Activated B cell treated with CpG ODN at 0.5 μM for 24 hours (primary cell): ENCODE measurements at regions of chr16 and their contacts with region 1.

Region 1: DNA sequence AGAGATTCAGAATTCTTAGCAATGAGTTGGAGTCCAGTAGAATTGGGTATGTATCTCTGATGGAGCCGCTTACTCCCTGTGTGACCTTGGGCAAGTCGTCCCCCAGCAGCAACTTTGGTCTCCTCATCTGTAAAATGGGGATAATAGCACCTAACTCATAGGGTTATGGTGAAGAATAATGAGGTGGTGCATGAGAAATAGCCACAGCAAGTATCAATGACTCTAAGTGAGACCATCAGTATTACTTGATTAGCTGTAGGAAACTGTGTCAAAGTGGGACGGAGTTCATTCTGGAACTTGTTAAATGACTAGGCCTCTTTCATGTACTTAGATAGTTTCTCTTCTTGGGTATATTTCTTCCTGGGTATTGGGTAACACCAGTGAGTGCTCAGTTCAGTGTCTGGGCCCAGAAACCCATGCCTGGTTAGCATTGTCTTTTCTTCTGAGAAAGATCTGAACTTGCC is 6.4 kb downstream of the PRKCB start:
- DNase-seq: no peak
- ATAC-seq: peak; percentile 14
- H3K4me3 Mint-ChIP-seq: peak overlapping the region; percentile 3
- H3K27ac Mint-ChIP-seq: peak overlapping the region; percentile 85
- H3K4me1 Mint-ChIP-seq: peaks cover 88% of the 10 kb centered on the region
- H3K27me3 Mint-ChIP-seq: no peaks in the 10 kb centered on the region
- CTCF ChIP-seq: no peak

Region 2: DNA sequence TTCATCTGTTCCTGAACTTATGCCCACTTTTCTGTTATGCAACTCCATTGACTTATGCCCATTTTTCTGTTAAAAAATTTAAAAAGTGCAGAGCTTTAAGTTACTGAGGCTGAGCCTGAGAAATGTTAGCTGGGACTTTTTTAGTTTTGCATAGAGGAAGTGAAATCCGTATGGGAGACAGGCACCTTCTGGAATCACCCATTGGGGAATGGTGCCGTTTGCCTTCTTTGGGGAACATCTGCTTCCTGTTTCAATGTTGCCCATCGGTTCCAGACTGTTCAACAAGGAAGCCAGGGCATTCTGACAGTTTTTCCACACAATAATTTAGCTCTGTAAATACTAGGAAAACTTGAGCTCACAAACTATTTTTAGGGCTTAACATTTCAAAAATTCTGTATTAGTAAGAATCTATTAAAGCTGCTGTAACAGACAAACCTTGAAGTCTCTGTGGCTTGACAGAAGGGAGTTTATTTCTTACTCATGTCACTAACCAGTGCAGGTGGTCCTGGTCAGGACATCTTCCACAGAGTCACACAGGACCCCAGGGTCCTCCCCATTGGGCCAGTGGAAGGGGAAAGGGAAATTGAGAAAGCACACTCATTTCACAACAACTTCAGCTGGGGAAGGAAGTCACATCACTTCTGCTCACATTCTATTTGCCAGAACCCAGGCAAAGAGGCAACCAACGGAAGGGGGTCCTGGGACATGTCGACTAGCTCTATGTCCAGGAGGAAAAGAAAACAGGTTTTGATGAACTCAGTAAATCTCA is 10.8 kb after region 1 on chr16:
- CTCF ChIA-PET with region 1: interaction called, 5 read pairs
- POLR2A ChIA-PET with region 1: interaction called, 25 read pairs
- intact Hi-C with region 1: loop called (anchors 1 kb)
- DNase-seq: no peak
- ATAC-seq: peak; percentile 54
- H3K4me3 Mint-ChIP-seq: peak overlapping the region; percentile 67
- H3K27ac Mint-ChIP-seq: peak overlapping the region; percentile 86
- H3K4me1 Mint-ChIP-seq: peaks cover 98% of the 10 kb centered on the region
- H3K27me3 Mint-ChIP-seq: no peaks in the 10 kb centered on the region
- CTCF ChIP-seq: no peak

Region 3: GRCh38 chr16:23858542-23858941 is 16.4 kb after region 1 on chr16:
- CTCF ChIA-PET with region 1: interaction called, 5 read pairs
- POLR2A ChIA-PET with region 1: interaction called, 25 read pairs
- intact Hi-C with region 1: loop called (anchors 1 kb)
- DNase-seq: no peak
- ATAC-seq: no peak
- H3K4me3 Mint-ChIP-seq: peak overlapping the region; percentile 24
- H3K27ac Mint-ChIP-seq: peak overlapping the region; percentile 89
- H3K4me1 Mint-ChIP-seq: peaks cover 97% of the 10 kb centered on the region
- H3K27me3 Mint-ChIP-seq: no peaks in the 10 kb centered on the region
- CTCF ChIP-seq: no peak

Region 4: DNA sequence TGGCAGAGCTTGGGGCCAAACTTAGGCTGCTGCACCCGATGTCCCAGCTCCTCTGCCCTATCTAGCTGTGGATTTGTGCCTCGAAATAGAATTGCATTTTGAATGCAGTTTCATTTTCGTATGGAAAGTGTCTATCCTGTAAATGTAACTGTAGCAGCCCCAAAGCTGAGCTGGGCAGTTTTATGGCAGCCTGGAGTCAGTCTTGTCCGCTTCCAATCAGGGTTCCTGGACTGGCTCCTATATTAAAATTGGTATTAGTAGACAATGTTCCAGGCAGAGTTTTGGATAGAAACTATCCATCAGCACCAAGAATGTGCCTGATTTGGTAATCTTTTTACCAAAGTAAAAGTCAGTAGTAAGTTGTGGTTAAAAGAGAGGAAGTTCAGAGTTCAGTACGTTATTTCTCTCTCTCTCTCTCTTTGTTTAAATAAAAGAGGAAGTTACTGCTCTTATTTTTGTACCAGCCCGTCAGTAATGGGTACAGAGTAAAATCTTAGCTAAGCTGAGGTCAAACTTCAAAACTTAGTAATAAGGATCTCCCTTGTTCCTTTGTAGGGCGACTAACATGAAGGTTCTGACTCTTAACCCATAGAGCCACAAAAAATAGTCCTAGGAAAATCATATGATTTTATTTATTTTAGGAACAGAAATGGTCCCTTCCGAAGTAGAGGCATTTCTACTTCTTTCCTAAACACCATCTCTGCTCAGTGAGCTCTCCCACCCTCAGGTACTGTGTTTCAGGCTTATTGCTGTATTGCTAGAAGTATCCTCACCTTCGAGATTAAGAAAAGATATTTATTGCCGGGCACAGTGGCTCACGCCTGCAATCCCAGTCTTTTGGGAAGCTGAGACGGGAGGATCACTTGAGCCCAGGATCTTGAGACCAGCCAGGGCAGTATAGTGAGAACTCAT is 21.6 kb after region 1 on chr16:
- CTCF ChIA-PET with region 1: interaction called, 4 read pairs
- POLR2A ChIA-PET with region 1: interaction called, 25 read pairs
- intact Hi-C with region 1: no loop called
- DNase-seq: no peak
- ATAC-seq: peak; percentile 78
- H3K4me3 Mint-ChIP-seq: peak overlapping the region; percentile 87
- H3K27ac Mint-ChIP-seq: peak overlapping the region; percentile 96
- H3K4me1 Mint-ChIP-seq: peaks cover 95% of the 10 kb centered on the region
- H3K27me3 Mint-ChIP-seq: no peaks in the 10 kb centered on the region
- CTCF ChIP-seq: no peak

Region 5: GRCh38 chr16:23905027-23905426 is 62.9 kb after region 1 on chr16:
- CTCF ChIA-PET with region 1: interaction called, 3 read pairs
- POLR2A ChIA-PET with region 1: interaction called, 11 read pairs
- intact Hi-C with region 1: no loop called
- DNase-seq: no peak
- ATAC-seq: no peak
- H3K4me3 Mint-ChIP-seq: no peak overlapping the region
- H3K27ac Mint-ChIP-seq: peak overlapping the region; percentile 6
- H3K4me1 Mint-ChIP-seq: peaks cover 94% of the 10 kb centered on the region
- H3K27me3 Mint-ChIP-seq: no peaks in the 10 kb centered on the region
- CTCF ChIP-seq: no peak